ENCODE measurements at regions of chr4 and their contacts with region 1.

Region 1: DNA sequence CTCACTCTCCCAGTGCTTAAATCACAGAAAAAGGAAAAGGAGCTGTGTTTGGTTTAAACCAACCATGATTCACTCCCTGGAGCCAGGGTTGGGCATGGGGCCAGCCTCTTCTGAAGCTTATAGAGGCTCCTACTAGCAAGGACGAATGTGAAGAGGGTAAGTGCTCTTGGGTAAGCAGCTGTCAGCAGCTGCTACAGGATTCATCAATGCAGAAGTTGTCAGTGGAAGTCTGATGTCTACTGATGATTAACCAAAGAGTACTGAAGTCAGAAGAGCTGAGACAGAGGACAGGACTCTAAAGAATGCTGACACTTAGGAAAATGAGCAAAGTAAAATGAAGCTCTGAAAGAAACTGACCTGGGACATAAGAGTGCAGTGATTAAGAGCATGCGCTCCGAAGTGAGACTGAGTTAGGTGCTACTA is 32.7 kb upstream of the JADE1 start:
- DNase-seq: peak; percentile 95
- ATAC-seq: peak; percentile 93
- H3K4me3 ChIP-seq: no peak overlapping the region
- H3K27ac ChIP-seq: no peak overlapping the region
- H3K4me1 ChIP-seq: peaks cover 3% of the 10 kb centered on the region
- H3K27me3 ChIP-seq: no peaks in the 10 kb centered on the region
- CTCF ChIP-seq: no peak
- POLR2A ChIP-seq: no peak
- RAD21 ChIP-seq: no peak

Region 2: DNA sequence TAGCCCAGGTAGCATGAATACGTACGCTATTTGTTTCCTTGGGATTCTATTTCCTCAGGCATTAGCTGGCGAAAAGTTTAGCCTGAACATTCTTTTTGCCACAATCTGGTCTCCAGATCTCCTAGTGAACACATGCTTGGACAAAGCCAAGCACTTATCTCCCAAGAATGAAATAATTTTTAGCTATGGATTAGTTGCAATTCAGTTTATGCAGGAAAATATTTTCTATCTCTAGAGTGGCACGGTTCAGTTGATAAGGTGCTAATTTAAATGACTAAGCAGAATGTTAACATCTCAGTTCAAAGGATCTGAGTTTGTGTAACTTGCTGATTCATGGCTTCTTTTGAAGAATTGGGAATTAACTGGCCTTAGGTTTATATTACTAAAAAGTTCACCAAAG is 25.5 kb before region 1 on chr4:
- CTCF ChIA-PET with region 1: no interaction called
- POLR2A ChIA-PET with region 1: interaction called, 12 read pairs
- dilution Hi-C with region 1: no loop called
- in situ Hi-C with region 1: no loop called
- intact Hi-C with region 1: no loop called
- DNase-seq: no peak
- ATAC-seq: no peak
- H3K4me3 ChIP-seq: no peak overlapping the region
- H3K27ac ChIP-seq: no peak overlapping the region
- H3K4me1 ChIP-seq: peaks cover 2% of the 10 kb centered on the region; the same call in 1 of the 2 replicates
- H3K27me3 ChIP-seq: no peaks in the 10 kb centered on the region
- CTCF ChIP-seq: no peak
- POLR2A ChIP-seq: no peak
- RAD21 ChIP-seq: no peak